ENCODE measurements at regions of chr3 and their contacts with region 1.

Region 1: GRCh38 chr3:139319428-139320402 is 24.1 kb upstream of the MRPS22 start:
- DNase-seq: no peak
- CTCF ChIP-seq: no peak

Region 2: GRCh38 chr3:138935848-138936740 is 383.6 kb before region 1 on chr3:
- in situ Hi-C with region 1: loop called (anchors 10 kb)
- DNase-seq: peak; percentile 91
- CTCF ChIP-seq: peak; percentile 95